ENCODE measurements at regions of chr3 and their contacts with region 1.

Region 1: GRCh38 chr3:102229062-102229655 is 205.7 kb upstream of the ZPLD1 start:
- DNase-seq: peak; percentile 57 to 74
- H3K4me3 ChIP-seq: no peak overlapping the region
- H3K27ac ChIP-seq: no peak overlapping the region
- H3K4me1 ChIP-seq: no peaks in the 10 kb centered on the region
- H3K27me3 ChIP-seq: no peaks in the 10 kb centered on the region
- CTCF ChIP-seq: peak; percentile 86 to 94 (median 90)
- POLR2A ChIP-seq: no peak

Region 2: GRCh38 chr3:101809178-101810021 is 419.8 kb before region 1 on chr3:
- intact Hi-C with region 1: loop called (anchors 10 kb)
- DNase-seq: no peak
- H3K4me3 ChIP-seq: no peak overlapping the region
- H3K27ac ChIP-seq: peak overlapping the region; percentile 57 to 78
- H3K4me1 ChIP-seq: no peaks in the 10 kb centered on the region
- H3K27me3 ChIP-seq: no peaks in the 10 kb centered on the region
- CTCF ChIP-seq: peak in 2 of 3 donors; percentile 70 to 77
- POLR2A ChIP-seq: no peak